ENCODE measurements at regions of chr7 and their contacts with region 1.

Region 1: DNA sequence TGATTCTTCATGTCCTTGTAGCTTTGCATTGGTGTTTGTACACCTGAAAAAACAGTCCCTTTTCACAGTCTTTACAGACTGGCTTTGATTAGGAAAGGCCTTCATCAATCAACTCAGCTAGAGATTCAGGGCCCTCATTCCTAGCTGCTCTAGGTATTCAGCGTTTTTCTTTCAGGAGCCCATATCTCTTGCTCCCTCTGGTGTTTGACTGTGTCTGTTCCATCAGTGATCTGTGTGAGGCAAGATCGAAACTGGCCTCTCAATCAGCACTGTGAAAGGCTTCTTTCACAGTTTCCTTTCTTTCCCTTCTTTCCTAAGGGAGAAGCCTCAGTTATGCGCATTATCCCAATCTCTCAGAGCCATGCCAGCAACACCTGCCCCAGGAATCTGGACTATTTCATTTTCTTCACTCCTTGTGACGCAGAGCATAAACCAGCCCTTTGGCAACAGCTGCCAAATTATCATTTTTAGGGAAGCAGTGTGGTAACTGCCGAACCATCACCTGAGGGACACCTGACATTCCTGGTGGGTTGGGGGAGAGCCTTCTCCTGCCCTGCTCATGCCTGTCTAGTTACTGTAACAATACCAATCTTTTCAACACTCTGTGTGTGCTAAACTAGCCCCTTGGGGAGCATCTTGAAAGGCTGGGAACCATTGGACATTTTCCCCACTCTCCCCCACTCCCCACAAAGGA is 75.7 kb upstream of the CCDC71L start:
- DNase-seq: peak; percentile 42

Region 2: DNA sequence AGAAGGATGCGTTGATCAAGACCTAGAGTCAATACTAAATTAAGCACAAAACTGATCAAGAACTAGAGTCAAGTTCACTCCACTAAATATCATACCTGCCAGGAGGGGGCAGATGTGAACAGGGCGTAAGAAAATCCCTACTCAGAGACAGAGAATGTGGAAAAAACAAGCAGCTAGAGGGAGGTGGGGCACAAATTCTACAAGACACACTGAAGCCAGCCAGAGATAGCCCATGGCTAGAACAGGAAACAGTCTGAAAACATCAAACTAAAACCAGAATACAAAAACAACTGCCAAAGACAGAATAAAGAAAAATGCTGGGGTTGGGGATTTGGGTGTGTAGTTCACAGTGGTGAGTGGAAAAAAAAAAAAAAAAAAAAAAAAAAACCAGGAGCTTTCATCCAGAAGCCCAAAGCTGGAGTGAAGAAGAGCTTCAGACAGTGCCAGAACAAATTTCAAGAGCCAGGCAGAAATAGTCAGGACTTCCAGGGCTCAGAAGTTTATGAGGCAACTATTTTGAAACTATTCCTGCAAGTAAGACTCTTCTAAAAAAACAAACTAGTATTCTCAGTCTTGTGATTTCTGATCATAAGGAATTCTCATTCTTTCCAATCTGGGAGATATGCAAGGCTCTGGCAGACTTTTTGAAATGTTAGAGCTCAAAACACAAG is 194.0 kb before region 1 on chr7:
- CTCF ChIA-PET with region 1: interaction called, 10 read pairs
- POLR2A ChIA-PET with region 1: no interaction called
- DNase-seq: peak; percentile 50

Region 3: DNA sequence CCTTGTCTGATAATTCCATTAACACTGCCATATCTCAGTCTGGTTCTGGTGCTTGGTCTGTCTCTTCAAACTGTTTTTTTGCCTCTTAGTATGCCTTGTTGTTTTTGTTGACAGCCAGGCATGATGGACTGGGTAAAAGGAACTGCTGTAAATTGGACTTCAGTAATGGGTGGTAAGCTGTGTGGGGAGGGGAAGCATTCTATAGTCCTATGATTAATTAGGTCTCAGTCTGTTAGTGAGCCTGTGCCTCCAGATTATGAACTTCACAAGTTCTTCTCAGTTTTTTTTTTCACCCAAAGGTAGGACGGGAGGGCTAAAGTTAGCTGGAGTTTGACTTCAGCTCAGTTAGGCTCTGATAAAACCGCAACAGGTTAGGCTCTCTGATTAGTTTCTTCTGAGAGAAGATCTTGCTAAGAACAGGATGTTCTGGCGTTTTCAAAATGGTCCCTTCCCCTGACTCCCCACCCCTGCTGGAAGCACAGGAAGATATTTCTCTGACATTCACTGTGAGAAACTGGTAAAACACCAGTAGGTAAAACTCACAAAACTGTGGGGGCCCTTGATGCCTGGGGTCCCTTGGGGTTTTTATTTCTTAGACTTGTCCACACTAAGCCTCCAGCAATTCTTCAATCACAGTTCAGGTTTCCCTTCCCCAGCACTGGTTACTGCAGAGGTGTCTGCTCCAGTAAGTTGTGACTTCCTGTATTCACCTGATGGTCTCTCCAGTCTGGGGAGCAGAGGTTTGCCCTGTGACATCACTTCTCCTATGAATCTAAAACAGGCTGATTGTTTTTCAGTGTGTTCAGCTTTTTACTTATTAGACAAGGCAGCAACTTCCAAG is 32.4 kb before region 1 on chr7:
- CTCF ChIA-PET with region 1: no interaction called
- POLR2A ChIA-PET with region 1: no interaction called
- DNase-seq: no peak

Region 4: DNA sequence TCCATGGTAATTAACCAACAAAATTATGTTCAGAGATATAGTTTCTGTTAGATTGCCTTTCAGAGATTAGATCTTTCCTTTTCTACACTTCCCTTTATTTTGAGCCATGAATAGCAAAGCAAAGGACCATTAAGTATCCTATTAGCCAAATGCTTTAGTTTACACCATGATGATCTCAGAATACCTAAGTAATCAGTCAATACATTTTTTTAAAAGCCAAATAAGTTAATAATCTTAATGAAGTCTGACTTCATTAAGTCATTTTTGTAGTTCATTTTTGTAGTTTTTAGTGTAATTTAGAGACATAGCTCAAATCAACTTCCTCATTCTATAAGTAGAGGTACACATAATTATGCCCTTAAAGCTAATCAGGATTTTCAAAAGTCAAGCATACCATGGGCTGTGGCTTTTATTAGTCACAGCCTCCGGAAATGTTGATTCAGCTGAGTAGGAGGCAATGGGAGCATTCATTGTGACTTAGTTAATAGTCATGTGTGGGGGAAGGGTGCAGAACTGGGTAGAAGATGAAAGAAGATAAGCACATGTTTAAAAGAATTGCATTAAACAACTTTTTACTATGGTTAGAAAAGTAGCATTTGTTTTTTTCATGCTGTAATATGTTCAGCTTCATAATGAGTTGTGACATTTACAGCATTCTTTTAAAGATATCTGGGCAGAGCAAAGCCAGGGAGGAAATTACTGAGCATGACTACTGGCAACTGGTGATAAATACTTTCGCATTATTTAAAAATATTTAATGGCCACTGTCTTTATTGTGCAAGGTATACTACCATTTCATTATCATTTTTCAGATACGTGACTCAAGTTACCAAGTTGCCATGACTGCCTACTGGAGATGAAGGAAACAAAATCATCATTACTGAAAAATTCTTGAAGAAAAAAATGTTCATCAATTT is 18.4 kb before region 1 on chr7:
- CTCF ChIA-PET with region 1: no interaction called
- POLR2A ChIA-PET with region 1: no interaction called
- DNase-seq: no peak

Region 5: DNA sequence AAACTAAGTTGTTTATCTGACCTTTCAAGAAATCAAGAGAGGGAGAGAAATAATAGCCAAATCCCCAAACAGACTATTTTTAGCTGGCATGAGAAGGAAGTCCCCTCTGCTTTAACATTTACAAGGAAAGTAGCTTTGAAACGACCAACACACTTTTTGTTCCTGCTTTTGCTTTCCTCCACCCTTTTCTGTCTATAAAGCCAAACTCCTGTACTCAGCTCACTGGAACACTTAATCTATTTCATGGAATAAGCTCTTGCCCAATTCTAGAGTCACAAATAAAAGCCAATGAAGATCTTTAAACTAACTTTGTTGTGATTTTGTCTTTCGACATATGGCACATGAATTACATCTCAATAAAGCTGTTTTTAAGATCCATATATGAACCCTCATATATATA is 11.1 kb after region 1 on chr7:
- CTCF ChIA-PET with region 1: no interaction called
- POLR2A ChIA-PET with region 1: no interaction called
- DNase-seq: no peak